Activated naive CD4-positive, alpha-beta T cell treated with anti-CD3 and anti-CD28 coated beads for 36 hours (primary cell): ENCODE measurements at regions of chr3 and their contacts with region 1.

Region 1: GRCh38 chr3:15815696-15816095 is 17.9 kb upstream of the ANKRD28 start:
- DNase-seq: no peak
- H3K4me3 Mint-ChIP-seq: no peak overlapping the region
- H3K27ac Mint-ChIP-seq: no peak overlapping the region
- H3K4me1 Mint-ChIP-seq: peaks cover 42% of the 10 kb centered on the region
- H3K27me3 Mint-ChIP-seq: no peaks in the 10 kb centered on the region

Region 2: GRCh38 chr3:15623535-15624440 is 191.9 kb before region 1 on chr3:
- CTCF ChIA-PET with region 1: interaction called, 23 read pairs
- intact Hi-C with region 1: no loop called
- DNase-seq: peak; percentile 40
- H3K4me3 Mint-ChIP-seq: peak overlapping the region; percentile 75
- H3K27ac Mint-ChIP-seq: peak overlapping the region; percentile 94
- H3K4me1 Mint-ChIP-seq: peaks cover 35% of the 10 kb centered on the region
- H3K27me3 Mint-ChIP-seq: no peaks in the 10 kb centered on the region

Region 3: GRCh38 chr3:15797642-15798303 is 17.9 kb before region 1 on chr3 and contains the start of gene ANKRD28:
- CTCF ChIA-PET with region 1: interaction called, 14 read pairs
- intact Hi-C with region 1: no loop called
- DNase-seq: no peak
- H3K4me3 Mint-ChIP-seq: peak within 1 kb of the TSS; percentile 33
- H3K27ac Mint-ChIP-seq: peak within 1 kb of the TSS; percentile 48
- H3K4me1 Mint-ChIP-seq: peaks cover 70% of the 10 kb centered on the region
- H3K27me3 Mint-ChIP-seq: no peaks in the 10 kb centered on the region
- total RNA-seq, gene ANKRD28: 21.4 to 23.6 TPM

Region 4: DNA sequence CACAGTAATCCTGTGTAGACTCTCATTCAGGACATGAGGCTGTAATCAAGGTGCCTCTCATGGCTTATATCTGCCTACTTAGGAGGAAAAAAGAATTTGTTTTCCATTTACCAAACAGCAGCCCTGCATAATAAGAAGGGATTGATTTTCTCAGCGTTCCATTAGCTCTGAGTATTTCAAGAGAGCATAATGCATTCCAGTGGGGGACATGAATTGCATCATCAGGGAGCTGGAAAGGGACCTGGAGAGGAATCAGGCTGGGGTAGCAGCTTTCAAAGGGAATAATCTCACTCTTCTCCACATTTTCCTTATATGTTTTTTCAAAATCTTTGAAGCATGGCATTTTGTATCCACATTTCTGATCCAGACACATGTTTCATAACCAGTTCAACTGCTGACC is 132.7 kb after region 1 on chr3:
- CTCF ChIA-PET with region 1: no interaction called
- intact Hi-C with region 1: loop called (anchors 5 kb)
- DNase-seq: no peak
- H3K4me3 Mint-ChIP-seq: no peak overlapping the region
- H3K27ac Mint-ChIP-seq: no peak overlapping the region
- H3K4me1 Mint-ChIP-seq: no peaks in the 10 kb centered on the region
- H3K27me3 Mint-ChIP-seq: no peaks in the 10 kb centered on the region

Region 5: GRCh38 chr3:16177962-16178627 is 362.4 kb after region 1 on chr3:
- CTCF ChIA-PET with region 1: no interaction called
- intact Hi-C with region 1: loop called (anchors 1 kb)
- DNase-seq: peak; percentile 73
- H3K4me3 Mint-ChIP-seq: no peak overlapping the region
- H3K27ac Mint-ChIP-seq: no peak overlapping the region
- H3K4me1 Mint-ChIP-seq: peaks cover 2% of the 10 kb centered on the region
- H3K27me3 Mint-ChIP-seq: peaks cover 7% of the 10 kb centered on the region